OCI-LY7 (cell line): ENCODE measurements at regions of chr7 and their contacts with region 1.

Region 1: DNA sequence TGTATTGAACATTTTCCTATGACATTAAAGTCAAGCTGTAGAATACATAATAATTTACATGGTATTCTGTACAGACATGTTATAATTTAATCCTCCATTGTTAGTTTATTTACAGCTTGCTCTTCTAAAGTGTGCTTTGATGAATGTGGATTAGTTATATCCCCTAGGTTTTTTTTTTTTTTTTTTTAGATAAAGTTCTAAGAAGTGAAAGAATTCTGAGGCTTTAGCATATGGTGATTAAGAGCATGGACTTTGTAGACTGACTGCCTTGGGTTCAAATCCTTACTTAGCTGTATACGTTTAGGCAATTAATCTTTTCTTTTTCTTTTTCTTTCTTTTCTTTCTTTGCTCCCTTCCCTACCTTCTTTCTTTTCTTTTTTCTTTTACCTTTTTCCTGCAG is 44.9 kb downstream of the MKLN1 start:
- DNase-seq: no peak
- H3K4me3 ChIP-seq: no peak overlapping the region
- H3K27ac ChIP-seq: no peak overlapping the region
- H3K4me1 ChIP-seq: peaks cover 21% of the 10 kb centered on the region
- CTCF ChIP-seq: no peak

Region 2: GRCh38 chr7:131355921-131356777 is 16.4 kb before region 1 on chr7:
- CTCF ChIA-PET with region 1: no interaction called
- POLR2A ChIA-PET with region 1: interaction called, 13 read pairs
- intact Hi-C with region 1: no loop called
- DNase-seq: no peak
- H3K4me3 ChIP-seq: no peak overlapping the region
- H3K27ac ChIP-seq: no peak overlapping the region
- H3K4me1 ChIP-seq: peaks cover 5% of the 10 kb centered on the region
- CTCF ChIP-seq: no peak